AG04449 (cell line): ENCODE measurements at regions of chr1 and their contacts with region 1.

Region 1: GRCh38 chr1:204162231-204163074 is 3.7 kb downstream of the REN start:
- DNase-seq: peak; percentile 12
- H3K4me3 ChIP-seq: no peak overlapping the region
- CTCF ChIP-seq: peak; percentile 98

Region 2: DNA sequence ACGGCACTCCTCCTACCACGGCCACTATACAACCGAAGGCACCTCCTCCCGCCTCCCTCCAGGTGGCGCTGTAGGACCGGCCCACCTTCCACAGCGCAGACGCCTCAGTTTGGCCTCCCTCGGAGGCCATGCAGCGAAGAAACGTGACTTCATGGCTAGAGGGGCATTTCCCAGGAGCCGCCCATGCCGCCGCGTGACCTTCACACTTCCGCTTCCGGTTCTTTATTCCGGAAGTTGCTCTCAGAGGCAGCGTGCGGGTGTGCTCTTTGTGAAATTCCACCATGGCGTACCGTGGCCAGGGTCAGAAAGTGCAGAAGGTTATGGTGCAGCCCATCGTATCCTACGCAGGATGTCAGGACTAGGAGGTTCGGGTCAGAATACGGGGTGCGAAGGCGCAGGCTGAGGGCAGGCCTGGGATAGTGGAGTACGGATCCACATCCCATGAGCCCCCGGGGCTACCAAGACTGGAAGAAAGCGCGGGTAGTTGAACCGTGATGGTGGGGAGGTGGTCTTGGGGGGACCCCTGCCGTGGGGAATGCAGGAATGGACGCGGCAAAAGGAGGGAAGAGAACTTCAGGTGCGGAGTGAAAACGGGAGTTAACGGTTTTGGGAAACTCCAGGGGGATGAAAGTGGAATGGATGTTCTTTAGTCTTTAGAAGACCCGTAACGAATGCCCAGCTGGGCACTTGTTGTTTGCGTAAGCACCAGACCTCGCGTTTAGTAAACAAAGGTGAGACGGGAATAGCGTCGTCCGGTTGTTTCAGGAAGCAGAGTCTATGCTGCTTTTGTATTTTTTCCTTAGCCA is 300.9 kb before region 1 on chr1 and contains the start of gene SNRPE:
- CTCF ChIA-PET with region 1: interaction called, 16 read pairs
- POLR2A ChIA-PET with region 1: no interaction called
- DNase-seq: peak; percentile 82
- H3K4me3 ChIP-seq: peak within 1 kb of the TSS; percentile 100
- CTCF ChIP-seq: peak; percentile 98

Region 3: GRCh38 chr1:204136814-204137213 is 25.6 kb before region 1 on chr1:
- CTCF ChIA-PET with region 1: interaction called, 12 read pairs
- POLR2A ChIA-PET with region 1: no interaction called
- DNase-seq: no peak
- H3K4me3 ChIP-seq: no peak overlapping the region
- CTCF ChIP-seq: no peak

Region 4: DNA sequence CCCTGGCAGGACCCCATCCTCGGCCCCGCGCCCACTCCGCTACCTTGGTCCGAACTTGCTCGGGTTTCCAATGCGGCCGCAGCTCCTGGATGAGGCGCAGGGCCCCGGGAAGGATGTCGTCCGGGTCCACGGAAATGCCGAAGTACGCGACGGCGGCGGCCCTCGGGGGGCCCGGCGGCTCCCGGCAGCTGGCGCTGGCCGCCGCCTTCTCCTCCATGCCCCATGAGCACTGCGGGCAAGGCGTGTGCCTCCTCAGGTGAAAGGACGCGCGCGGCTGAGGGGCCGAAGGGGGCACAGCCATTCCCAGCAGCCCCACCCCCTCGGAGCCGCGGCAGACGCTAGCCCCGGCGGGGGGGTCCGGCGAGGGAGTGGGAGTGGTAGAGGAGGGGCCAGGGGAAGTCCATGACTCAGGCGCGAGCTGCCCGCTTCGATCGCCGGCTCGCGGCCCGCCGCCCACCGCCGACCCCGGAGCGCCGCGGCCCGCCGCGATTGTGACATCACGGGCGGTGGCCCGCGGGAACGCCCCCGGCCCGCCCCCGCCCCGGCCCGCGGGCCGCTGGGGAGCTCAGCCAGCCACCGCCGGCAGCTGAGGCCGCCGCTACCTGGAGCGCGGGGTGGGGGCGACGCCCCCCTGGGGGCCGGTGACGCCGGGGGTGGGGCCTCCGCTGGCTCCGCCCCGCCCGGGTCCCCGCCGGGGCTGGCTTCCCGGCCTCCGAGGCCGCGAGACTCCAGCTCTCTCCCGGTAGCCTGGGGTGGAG is 10.7 kb before region 1 on chr1 and contains the start of gene ETNK2:
- CTCF ChIA-PET with region 1: interaction called, 46 read pairs
- POLR2A ChIA-PET with region 1: no interaction called
- DNase-seq: no peak
- H3K4me3 ChIP-seq: peak within 1 kb of the TSS; percentile 66
- CTCF ChIP-seq: no peak

Region 5: GRCh38 chr1:204190212-204191211 is 28.1 kb after region 1 on chr1:
- CTCF ChIA-PET with region 1: interaction called, 548 read pairs
- POLR2A ChIA-PET with region 1: no interaction called
- DNase-seq: no peak
- H3K4me3 ChIP-seq: no peak overlapping the region; the same call in 1 of the 2 replicates
- CTCF ChIP-seq: no peak

Region 6: DNA sequence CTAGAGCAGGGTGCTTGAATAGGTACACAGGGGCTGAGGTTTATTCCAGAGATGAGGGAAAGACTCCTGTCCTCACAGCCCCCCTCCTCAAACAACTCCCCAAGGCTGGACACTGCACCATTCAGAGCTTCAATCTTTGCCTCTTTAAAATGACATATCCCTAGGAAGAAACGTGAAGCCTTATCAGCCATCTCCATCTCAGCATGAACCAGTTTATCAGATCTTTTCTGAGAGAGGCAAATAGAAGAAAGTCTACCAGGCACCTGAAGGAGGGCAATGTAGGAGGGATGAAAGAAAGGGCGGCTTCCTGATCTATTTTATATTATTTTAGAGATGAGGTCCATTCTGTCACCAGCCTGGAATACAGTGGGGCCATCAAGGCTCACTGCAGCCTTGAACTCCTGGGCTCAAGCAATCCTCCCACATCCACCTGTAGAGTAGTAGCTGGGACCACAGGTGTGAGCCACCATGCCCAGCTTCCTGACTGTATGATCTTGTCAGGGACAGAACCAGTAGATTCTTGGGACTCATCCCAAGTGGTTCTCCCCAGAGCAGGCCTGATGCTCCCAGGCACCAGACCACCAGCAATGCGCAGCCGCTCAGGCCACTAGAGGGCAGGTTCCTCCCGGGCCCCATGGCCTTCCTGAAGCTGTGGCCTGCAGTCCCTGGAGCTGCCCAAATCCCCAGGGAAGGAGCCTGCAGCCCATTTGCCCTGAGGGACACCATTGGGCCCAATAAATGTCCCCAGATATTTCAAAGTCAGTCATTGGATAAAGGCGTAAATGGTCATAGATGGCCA is 95.7 kb after region 1 on chr1:
- CTCF ChIA-PET with region 1: interaction called, 17 read pairs
- POLR2A ChIA-PET with region 1: no interaction called
- DNase-seq: no peak
- H3K4me3 ChIP-seq: no peak overlapping the region
- CTCF ChIP-seq: peak; percentile 86

Region 7: GRCh38 chr1:204494281-204495077 is 332.0 kb after region 1 on chr1 and contains the start of gene PIK3C2B:
- CTCF ChIA-PET with region 1: interaction called, 10 read pairs
- POLR2A ChIA-PET with region 1: no interaction called
- DNase-seq: no peak
- H3K4me3 ChIP-seq: peak within 1 kb of the TSS; percentile 94
- CTCF ChIP-seq: peak; percentile 73